ENCODE measurements at regions of chr10 and their contacts with region 1.

Region 1: DNA sequence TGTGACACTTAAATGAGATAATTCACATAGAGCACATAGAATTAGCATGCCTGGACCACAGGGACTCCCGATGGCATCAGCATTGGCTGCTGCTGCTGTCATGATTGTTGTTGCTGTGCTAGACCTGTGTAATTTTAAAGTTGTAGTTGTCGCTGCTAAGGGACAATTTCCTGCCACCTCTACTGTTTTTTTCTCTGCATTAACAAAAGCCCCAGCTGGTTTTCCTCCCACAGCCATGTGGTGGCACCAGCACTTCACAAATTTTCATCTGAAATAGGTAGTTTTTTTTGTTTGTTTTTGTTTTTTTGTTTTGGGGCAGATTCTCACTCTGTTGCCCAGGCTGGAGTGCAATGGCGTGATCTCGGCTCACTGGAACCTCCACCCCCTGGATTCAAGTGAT is 25.4 kb upstream of the PRXL2A start:
- DNase-seq: peak; percentile 73
- ATAC-seq: peak; percentile 64
- H3K4me3 Mint-ChIP-seq: no peak overlapping the region
- H3K27ac Mint-ChIP-seq: peak overlapping the region; percentile 37
- H3K4me1 Mint-ChIP-seq: peaks cover 14% of the 10 kb centered on the region
- H3K27me3 Mint-ChIP-seq: no peaks in the 10 kb centered on the region
- CTCF ChIP-seq: peak; percentile 74

Region 2: DNA sequence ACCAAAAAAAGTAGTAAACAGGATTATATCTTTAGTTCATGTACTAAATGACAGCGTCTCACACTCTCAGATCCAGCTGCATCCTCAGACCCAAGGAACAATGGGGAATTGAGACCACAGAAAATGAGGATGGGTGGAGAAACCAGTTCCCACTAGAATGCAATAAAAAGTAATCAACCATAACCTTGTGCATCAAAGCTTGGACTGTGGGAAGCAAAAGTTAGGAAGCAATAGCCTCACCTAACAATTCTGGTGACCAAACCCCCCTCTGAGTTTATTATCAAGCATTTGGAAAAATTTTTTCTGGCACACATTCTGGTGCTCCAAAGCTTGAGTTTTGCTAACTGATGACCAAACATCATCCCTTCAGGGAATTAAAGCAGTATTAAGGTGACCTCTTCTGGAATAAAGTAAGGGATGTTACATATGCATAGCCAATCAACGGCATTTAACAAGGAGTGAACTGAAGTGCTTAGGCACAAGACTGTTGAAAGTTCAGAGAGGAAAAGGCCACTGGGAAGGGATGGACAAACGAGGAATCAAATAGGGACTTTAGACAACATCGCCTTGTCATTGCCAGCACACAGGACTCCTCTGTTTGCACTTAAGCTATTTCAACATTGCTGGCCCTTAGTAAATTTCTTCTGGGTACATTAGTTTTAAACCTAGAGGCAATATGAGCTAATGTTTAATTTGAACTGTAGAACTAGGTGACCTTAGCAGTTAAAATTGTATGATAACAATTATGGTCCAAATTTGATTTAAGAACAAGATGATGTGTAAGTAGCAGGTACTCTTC is 92.3 kb before region 1 on chr10:
- CTCF ChIA-PET with region 1: no interaction called
- POLR2A ChIA-PET with region 1: no interaction called
- intact Hi-C with region 1: no loop called
- DNase-seq: no peak
- ATAC-seq: no peak
- H3K4me3 Mint-ChIP-seq: no peak overlapping the region
- H3K27ac Mint-ChIP-seq: no peak overlapping the region
- H3K4me1 Mint-ChIP-seq: no peaks in the 10 kb centered on the region
- H3K27me3 Mint-ChIP-seq: peaks cover 8% of the 10 kb centered on the region
- CTCF ChIP-seq: no peak

Region 3: DNA sequence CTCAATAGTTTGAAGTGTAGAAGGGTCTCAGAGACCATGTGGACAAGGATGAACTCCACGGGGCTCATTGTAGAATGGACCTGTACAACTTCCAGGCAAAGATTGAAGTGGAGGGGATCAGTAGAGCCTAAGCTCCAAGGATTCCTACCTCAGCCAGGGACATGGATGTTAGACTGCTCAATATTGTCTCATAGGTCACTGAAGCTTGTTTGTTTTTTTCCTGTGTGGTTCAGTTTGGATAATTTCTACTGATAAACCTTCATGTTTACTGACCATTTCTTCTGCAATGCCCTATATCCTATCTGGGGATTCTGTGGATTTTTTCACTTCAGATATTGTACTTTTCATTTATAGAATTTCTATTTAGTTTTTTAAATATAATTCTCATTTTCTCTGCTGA is 17.5 kb before region 1 on chr10:
- CTCF ChIA-PET with region 1: interaction called, 16 read pairs
- POLR2A ChIA-PET with region 1: interaction called, 3 read pairs
- intact Hi-C with region 1: no loop called
- DNase-seq: no peak
- ATAC-seq: no peak
- H3K4me3 Mint-ChIP-seq: no peak overlapping the region
- H3K27ac Mint-ChIP-seq: no peak overlapping the region
- H3K4me1 Mint-ChIP-seq: no peaks in the 10 kb centered on the region
- H3K27me3 Mint-ChIP-seq: peaks cover 5% of the 10 kb centered on the region
- CTCF ChIP-seq: no peak

Region 4: DNA sequence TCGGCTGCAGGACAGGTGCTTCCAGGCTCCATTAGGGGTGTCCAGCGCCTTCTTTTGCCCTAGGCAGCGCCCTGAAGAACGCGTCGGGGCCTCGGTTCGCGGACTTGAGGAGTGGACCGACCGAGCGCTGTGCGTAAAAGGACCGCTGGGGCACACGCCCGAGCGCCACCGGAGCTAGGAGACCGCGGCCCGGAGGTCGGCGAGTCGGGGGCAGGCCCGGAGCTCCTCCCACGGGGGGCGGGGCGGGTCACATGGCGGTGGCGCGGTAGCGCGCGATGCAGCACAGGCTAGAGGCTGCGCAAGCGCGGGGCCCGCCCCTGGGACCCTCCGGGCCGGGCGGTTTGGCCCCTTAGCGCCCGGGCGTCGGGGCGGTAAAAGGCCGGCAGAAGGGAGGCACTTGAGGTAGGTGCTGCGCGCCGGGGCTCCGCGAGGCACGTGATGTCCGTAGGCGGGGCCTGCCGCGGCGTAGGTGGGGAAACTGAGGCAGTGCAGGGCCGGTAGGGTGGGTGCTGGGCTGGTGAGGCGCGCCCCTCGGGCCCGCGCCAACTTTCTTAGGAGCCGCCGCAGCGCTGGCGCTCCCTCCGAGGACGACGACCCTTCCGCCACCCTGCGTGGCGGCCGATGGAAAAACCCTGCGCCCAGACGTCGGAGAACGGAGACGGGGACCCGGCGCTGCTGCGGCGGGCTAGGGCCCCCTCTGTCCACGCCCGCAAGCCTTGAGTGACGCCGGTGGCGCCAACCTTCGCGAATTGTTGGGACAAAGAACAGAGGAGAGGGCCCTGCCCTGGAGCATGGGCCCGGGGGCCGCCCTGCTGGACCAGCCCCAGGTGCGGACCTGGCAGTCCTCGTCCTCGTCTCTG is 25.5 kb after region 1 on chr10 and contains the start of gene PRXL2A:
- CTCF ChIA-PET with region 1: interaction called, 34 read pairs
- POLR2A ChIA-PET with region 1: no interaction called
- intact Hi-C with region 1: no loop called
- DNase-seq: peak; percentile 92
- ATAC-seq: peak; percentile 92
- H3K4me3 Mint-ChIP-seq: peak within 1 kb of the TSS; percentile 76
- H3K27ac Mint-ChIP-seq: peak within 1 kb of the TSS; percentile 81
- H3K4me1 Mint-ChIP-seq: peaks cover 34% of the 10 kb centered on the region
- H3K27me3 Mint-ChIP-seq: peaks cover 3% of the 10 kb centered on the region
- CTCF ChIP-seq: no peak
- total RNA-seq, gene PRXL2A: 21.0 to 22.7 TPM

Region 5: GRCh38 chr10:80453701-80454513 is 70.9 kb after region 1 on chr10 and contains the start of gene TSPAN14:
- CTCF ChIA-PET with region 1: interaction called, 13 read pairs
- POLR2A ChIA-PET with region 1: no interaction called
- intact Hi-C with region 1: no loop called
- DNase-seq: peak; percentile 77
- ATAC-seq: peak; percentile 76
- H3K4me3 Mint-ChIP-seq: peak within 1 kb of the TSS; percentile 86
- H3K27ac Mint-ChIP-seq: peak within 1 kb of the TSS; percentile 95
- H3K4me1 Mint-ChIP-seq: peaks cover 39% of the 10 kb centered on the region
- H3K27me3 Mint-ChIP-seq: no peaks in the 10 kb centered on the region
- CTCF ChIP-seq: no peak
- total RNA-seq, gene TSPAN14: 43.9 to 45.5 TPM

Region 6: GRCh38 chr10:80492848-80493521 is 110.0 kb after region 1 on chr10:
- CTCF ChIA-PET with region 1: no interaction called
- POLR2A ChIA-PET with region 1: no interaction called
- intact Hi-C with region 1: no loop called
- DNase-seq: no peak
- ATAC-seq: no peak
- H3K4me3 Mint-ChIP-seq: peak overlapping the region; percentile 46
- H3K27ac Mint-ChIP-seq: peak overlapping the region; percentile 92
- H3K4me1 Mint-ChIP-seq: peaks cover 96% of the 10 kb centered on the region
- H3K27me3 Mint-ChIP-seq: no peaks in the 10 kb centered on the region
- CTCF ChIP-seq: no peak

Region 7: DNA sequence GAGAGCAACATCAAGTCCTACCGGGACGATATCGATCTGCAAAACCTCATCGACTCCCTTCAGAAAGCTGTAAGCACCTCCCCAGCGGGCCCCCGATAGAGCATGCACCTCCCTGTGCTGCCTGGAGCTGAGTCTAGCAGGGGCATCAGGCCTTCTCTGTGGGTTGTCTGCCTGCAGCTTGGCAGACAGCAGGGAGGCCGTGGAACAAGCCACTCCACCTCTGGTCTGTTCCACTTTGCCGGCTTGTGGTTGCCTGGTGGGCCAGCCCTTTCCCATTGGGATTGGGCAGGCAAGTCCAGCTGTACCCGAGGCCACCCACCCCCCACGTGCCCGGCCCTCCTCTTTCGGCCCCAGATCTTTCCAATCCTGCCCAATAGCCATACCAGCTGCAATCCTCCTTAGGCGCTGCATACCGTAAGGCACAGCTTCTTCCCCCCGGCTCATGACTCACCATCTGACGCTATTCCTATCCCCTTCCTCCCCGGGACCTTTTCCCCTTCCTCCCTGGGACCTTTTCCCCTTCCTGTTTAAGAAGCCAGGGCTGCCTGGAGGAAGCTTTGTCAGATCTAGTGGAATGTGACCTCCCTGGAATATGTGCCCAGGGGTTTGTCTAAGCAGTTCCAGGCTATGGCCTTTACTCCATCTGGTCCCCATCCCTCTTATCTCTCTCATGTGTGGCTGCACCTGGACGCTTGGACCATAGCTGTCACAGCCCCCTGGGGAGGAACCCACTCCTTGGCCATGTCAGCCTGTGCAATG is 126.6 kb after region 1 on chr10:
- CTCF ChIA-PET with region 1: interaction called, 61 read pairs
- POLR2A ChIA-PET with region 1: interaction called, 3 read pairs
- intact Hi-C with region 1: loop called (anchors 5 kb)
- DNase-seq: no peak
- ATAC-seq: no peak
- H3K4me3 Mint-ChIP-seq: no peak overlapping the region
- H3K27ac Mint-ChIP-seq: peak overlapping the region; percentile 53
- H3K4me1 Mint-ChIP-seq: peaks cover 30% of the 10 kb centered on the region
- H3K27me3 Mint-ChIP-seq: no peaks in the 10 kb centered on the region
- CTCF ChIP-seq: no peak

Measured in activated CD8-positive, alpha-beta T cell treated with anti-CD3 and anti-CD28 coated beads for 36 hours (primary cell).